ENCODE measurements at regions of chr5 and their contacts with region 1.

Region 1: DNA sequence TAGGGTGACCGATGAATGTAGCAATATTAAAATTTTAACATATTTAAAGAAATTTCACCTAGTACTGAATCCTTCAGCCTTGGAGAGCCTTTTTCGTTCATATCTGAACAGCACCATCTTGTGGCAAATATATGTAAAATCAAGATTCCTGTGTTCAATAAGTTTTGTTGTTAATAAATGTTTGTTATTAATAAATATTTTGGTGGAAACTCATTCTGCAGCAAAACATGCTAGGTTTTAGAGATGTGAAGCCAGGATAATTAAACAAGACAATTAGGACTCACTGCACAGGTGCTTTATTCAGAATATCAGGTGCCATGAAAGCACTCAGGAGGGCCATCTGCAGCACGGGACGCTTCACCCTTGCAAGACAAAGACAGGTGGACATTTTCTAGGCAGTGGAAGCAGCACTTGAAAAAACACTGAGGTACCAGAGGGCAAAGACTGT is 15.7 kb downstream of the TICAM2 start:
- DNase-seq: peak; percentile 4
- ATAC-seq: no peak
- H3K4me3 ChIP-seq: no peak overlapping the region
- H3K27ac ChIP-seq: no peak overlapping the region
- H3K4me1 ChIP-seq: no peaks in the 10 kb centered on the region
- H3K27me3 ChIP-seq: no peaks in the 10 kb centered on the region
- CTCF ChIP-seq: peak; percentile 52
- EP300 ChIP-seq: no peak
- POLR2A ChIP-seq: no peak
- RAD21 ChIP-seq: no peak

Region 2: DNA sequence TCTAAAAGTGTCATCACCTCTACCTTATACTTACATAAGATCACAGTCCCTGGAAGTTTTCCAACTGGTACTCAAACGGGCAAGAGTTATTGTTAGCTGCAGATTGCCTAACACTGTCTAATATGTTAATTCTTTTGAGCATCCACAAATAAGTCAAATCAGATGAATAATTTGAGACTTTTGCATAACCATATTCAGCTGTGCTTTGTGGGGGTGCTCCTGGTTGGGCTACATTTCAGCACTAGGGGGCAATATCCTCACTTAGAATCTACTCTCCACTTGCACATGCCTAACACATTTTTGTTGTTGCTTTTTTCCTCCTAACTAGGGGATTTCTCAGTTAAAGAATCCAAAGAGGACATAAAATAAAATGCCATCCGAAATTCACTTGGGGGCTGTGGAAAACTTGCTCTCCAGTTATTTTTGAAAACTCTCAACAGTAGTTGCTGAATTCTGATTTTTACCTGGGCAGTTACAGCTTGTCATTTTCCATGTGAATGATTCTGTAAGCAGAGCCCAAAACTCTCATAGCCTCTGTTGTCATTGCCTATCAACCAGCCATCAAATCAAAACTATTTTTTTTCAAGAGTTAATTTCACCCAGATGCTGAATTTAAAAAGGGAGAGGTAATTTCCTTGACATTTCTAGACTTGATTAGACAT is 488.5 kb before region 1 on chr5:
- CTCF ChIA-PET with region 1: interaction called, 3 read pairs
- POLR2A ChIA-PET with region 1: no interaction called
- in situ Hi-C with region 1: no loop called
- intact Hi-C with region 1: loop called (anchors 5 kb)
- DNase-seq: peak; percentile 32
- ATAC-seq: peak; percentile 93
- H3K4me3 ChIP-seq: no peak overlapping the region
- H3K27ac ChIP-seq: no peak overlapping the region
- H3K4me1 ChIP-seq: peaks cover 21% of the 10 kb centered on the region
- H3K27me3 ChIP-seq: peaks cover 0 to 20% of the 10 kb centered on the region in 2 experiments; a peak in 2 of 5 replicates
- CTCF ChIP-seq: peak; percentile 77
- EP300 ChIP-seq: no peak
- POLR2A ChIP-seq: no peak
- RAD21 ChIP-seq: 0 out of 2 replicates have a peak, but pooled peaks have one; percentile 45

Region 3: GRCh38 chr5:115309751-115310370 is 276.8 kb before region 1 on chr5:
- CTCF ChIA-PET with region 1: interaction called, 19 read pairs
- POLR2A ChIA-PET with region 1: no interaction called
- in situ Hi-C with region 1: loop called (anchors 5 kb)
- intact Hi-C with region 1: loop called (anchors 1 kb)
- DNase-seq: peak; percentile 26
- ATAC-seq: no peak
- H3K4me3 ChIP-seq: no peak overlapping the region
- H3K27ac ChIP-seq: no peak overlapping the region
- H3K4me1 ChIP-seq: no peaks in the 10 kb centered on the region
- H3K27me3 ChIP-seq: no peaks in the 10 kb centered on the region
- CTCF ChIP-seq: peak; percentile 52
- EP300 ChIP-seq: no peak
- POLR2A ChIP-seq: no peak
- RAD21 ChIP-seq: peak; percentile 31; the same call in 1 of the 2 replicates

Region 4: DNA sequence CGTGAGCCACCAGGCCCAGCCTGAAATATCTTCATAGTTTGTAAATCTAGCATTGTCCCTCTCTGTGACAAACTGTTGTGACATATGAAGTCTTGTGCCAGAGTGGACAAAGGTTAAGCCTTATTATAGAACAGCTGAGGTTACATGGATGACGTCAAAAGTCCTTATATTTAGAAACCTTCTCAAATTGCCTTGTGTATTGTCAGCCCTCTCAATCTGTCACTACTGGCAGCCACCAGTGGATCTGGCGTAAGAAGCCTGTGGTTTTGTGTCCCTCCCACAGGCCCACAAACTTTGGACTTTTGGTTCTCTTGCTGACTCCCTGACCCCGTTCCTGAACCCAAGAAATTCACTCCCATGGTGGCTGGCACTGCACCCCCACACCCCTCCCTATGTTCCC is 210.7 kb before region 1 on chr5:
- CTCF ChIA-PET with region 1: no interaction called
- POLR2A ChIA-PET with region 1: no interaction called
- in situ Hi-C with region 1: no loop called
- intact Hi-C with region 1: loop called (anchors 2 kb)
- DNase-seq: peak; percentile 4
- ATAC-seq: no peak
- H3K4me3 ChIP-seq: no peak overlapping the region
- H3K27ac ChIP-seq: no peak overlapping the region
- H3K4me1 ChIP-seq: peaks cover 6% of the 10 kb centered on the region
- H3K27me3 ChIP-seq: peaks cover 0 to 2% of the 10 kb centered on the region in 2 experiments; a peak in 1 of 5 replicates
- CTCF ChIP-seq: no peak
- EP300 ChIP-seq: no peak
- POLR2A ChIP-seq: no peak
- RAD21 ChIP-seq: no peak

Region 5: DNA sequence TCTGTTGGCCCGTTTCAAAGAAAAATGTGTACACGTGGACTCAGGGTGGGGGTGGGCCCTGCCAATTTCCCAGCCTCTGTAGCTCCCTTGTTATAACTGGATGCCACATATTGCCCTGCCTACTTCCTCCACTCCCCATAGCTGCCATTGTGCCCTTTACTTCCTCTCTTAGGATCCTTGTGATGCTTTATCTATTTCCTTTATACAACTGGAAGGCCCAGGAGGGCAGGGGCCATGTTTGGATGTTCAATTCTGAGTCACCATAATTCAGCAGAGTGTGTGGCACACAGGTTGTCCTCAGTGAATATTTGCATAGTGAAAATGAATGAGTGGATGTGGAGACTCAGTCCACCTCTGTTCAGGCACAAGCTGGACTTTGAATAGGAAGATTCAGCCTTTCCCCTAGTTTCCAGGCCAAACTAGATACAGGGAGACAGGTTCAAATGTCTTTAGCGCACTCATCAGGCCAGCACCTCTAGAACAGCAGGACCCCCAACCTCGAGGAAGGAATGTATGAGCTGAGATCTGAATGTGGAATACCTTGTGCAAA is 31.5 kb before region 1 on chr5:
- CTCF ChIA-PET with region 1: no interaction called
- POLR2A ChIA-PET with region 1: no interaction called
- in situ Hi-C with region 1: no loop called
- intact Hi-C with region 1: no loop called
- DNase-seq: no peak
- ATAC-seq: peak; percentile 58; the same call in 2 of the 3 replicates
- H3K4me3 ChIP-seq: no peak overlapping the region
- H3K27ac ChIP-seq: no peak overlapping the region
- H3K4me1 ChIP-seq: peaks cover 11% of the 10 kb centered on the region
- H3K27me3 ChIP-seq: peaks cover 0 to 7% of the 10 kb centered on the region in 2 experiments; a peak in 2 of 5 replicates
- CTCF ChIP-seq: no peak
- EP300 ChIP-seq: no peak
- POLR2A ChIP-seq: no peak
- RAD21 ChIP-seq: no peak

Region 6: GRCh38 chr5:115733607-115734006 is 147.0 kb after region 1 on chr5:
- CTCF ChIA-PET with region 1: no interaction called
- POLR2A ChIA-PET with region 1: no interaction called
- in situ Hi-C with region 1: no loop called
- intact Hi-C with region 1: no loop called
- DNase-seq: no peak
- ATAC-seq: no peak
- H3K4me3 ChIP-seq: no peak overlapping the region
- H3K27ac ChIP-seq: no peak overlapping the region
- H3K4me1 ChIP-seq: peaks cover 19% of the 10 kb centered on the region
- H3K27me3 ChIP-seq: no peaks in the 10 kb centered on the region
- CTCF ChIP-seq: no peak
- EP300 ChIP-seq: no peak
- POLR2A ChIP-seq: no peak
- RAD21 ChIP-seq: no peak

Measured in HepG2 (cell line).